ENCODE measurements at regions of chr11 and their contacts with region 1.

Region 1: DNA sequence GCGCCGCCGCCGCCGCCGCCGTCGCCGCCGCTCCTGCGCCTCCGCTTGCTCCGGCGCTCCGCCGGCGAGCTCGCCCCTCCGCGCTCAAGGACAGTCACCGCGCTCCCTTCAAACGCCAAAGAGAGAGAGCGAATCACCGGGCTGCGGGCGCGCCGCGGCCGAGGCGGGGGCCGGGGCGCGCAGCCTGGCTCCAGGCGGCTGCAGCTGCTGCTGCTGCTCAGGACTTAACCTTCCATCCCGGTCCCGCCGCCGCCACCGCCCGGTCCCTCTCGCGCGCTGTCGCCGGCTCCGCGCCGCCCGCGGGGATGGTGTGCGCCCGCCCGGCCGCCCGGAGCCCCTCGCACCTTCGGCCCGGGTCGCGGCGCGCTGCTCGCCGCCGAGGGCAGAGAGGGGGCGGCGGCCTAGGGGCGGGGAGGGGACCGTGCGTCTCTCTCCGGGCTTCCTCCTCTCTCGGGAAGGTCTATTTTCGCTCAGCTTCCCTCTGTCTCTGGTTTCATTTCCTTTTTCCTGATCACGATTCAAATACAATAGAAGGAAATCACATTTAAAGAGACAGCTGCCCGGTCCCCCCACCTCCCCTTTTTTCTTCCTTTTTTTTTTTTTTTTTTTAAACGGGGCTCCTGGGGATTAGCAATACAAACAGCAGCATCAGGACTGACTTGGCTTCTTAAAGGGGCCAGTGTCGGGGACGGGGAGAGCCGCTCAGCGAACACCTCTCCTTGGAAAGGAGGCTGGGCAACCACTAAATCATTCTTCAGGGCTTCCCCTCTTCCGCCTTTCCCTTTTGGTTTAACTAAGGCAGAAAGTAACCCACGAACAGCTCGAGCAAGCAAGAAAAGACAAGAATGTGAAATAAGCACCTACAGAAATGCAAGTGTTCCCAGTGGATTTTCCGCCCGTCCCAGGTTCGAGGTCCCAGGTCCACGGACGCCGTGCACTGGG is 22.1 kb downstream of the LMO2 start:
- DNase-seq: no peak
- H3K4me3 ChIP-seq: peak overlapping the region; percentile 67 to 85 (median 81)
- H3K27ac ChIP-seq: peak overlapping the region; percentile 54 to 84
- H3K4me1 ChIP-seq: no peaks in the 10 kb centered on the region
- H3K27me3 ChIP-seq: peaks cover 0 to 9% of the 10 kb centered on the region in 2 donors
- CTCF ChIP-seq: no peak
- POLR2A ChIP-seq: no peak

Region 2: GRCh38 chr11:33959855-33960400 is 90.2 kb after region 1 on chr11:
- intact Hi-C with region 1: loop called (anchors 5 kb)
- DNase-seq: no peak
- H3K4me3 ChIP-seq: no peak overlapping the region
- H3K27ac ChIP-seq: no peak overlapping the region
- H3K4me1 ChIP-seq: no peaks in the 10 kb centered on the region
- H3K27me3 ChIP-seq: no peaks in the 10 kb centered on the region
- CTCF ChIP-seq: no peak
- POLR2A ChIP-seq: no peak

Measured in breast epithelium (tissue), 4 donors.